ENCODE measurements at regions of chr2 and their contacts with region 1.

Region 1: DNA sequence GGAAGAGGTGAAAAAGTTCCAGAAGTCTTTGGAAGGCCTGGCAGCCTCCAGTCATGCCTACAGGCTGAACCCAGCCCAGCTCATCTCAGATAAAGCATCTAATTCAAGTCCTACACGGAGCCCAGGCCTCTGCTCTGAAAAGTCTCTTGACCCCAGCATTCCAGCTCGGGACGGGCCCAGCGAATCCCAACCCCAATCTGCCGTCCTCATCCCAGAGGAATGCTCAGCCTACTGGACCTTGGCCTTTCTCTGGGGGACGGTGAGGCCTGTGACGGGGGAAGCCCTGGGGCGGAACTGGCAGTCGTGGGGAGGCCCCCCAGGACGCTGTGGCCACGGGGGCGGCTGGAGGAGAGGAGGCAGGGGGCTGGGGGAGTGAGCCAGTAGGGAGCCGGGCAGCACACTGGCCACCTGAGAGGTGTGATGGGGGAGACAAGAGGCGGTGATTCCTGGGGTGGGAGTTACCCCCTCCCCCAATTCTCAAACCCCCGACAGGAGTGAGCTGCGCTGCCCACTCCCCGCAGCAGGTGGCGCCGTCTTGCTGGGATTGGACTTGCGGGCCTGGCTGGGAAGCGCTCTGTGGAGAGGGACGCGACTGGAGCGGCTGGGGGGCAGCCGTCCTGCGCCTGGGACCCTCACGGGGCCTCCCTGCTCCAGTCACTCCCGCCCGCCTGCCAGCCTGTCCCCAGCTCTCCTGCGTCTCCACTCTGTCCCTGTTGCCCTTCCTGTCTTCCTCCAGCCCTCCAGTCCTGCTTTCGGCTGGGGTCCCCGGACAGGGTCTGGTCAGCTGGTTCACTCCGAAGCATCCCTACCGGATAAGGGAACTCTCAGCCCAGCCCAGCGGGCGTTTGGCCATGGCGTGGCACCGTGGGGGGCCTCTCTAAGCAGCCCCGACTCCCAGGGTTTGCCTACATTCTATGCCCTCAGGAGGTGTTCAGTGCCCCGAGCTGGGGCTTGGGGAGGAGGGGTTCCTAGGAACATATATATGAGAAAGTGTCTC is 182.6 kb upstream of the HAAO start:
- DNase-seq: peak; percentile 79 to 82 (median 80)
- ATAC-seq: peak; percentile 62 to 70 (median 66)
- H3K4me3 ChIP-seq: peak overlapping the region; percentile 24 to 47 (median 33)
- H3K27ac ChIP-seq: peak overlapping the region in 2 of 3 donors; percentile 65 to 67
- H3K4me1 ChIP-seq: peaks cover 0 to 31% (median 14%) of the 10 kb centered on the region in 4 donors
- H3K27me3 ChIP-seq: no peaks in the 10 kb centered on the region
- CTCF ChIP-seq: peak; percentile 82 to 93 (median 86)
- POLR2A ChIP-seq: no peak

Region 2: DNA sequence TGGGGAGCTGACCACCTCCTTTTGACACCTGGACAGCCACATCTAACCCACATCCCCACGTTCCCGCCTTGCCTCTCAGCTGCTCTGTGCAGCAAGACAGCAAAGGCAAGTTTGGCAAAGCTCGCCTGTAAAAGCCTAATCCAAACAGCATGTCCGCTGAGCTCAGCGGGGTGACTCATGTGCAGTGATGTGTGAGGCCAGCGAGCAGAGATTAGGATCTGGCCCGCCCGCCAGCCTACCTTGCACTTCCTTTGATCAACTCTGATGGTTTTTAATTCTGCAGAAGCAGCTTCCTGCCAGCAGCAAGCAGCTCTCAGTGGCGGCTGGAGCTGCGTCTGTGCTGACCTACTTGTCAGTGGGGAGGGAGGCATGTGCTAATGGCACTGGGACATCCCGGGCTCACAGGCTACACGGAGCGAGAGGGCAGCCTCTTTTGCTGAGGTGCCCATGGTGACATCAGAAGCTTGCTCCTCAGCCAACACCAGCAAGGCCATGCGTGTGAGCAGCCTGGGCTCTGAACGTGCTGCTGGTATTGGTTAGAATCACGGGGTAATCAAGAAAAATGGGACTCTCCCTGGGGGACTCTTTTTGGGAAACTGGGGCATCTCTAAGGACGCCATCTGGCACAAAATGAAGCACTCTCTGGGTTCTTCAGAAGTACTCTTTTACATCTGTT is 841.9 kb before region 1 on chr2:
- intact Hi-C with region 1: no loop called
- DNase-seq: peak; percentile 87 to 91 (median 89)
- ATAC-seq: peak; percentile 91 to 96 (median 94)
- H3K4me3 ChIP-seq: peak overlapping the region; percentile 8 to 41 (median 36)
- H3K27ac ChIP-seq: peak overlapping the region; percentile 79 to 94 (median 80)
- H3K4me1 ChIP-seq: peaks cover 0 to 20% (median 8%) of the 10 kb centered on the region in 4 donors
- H3K27me3 ChIP-seq: no peaks in the 10 kb centered on the region
- CTCF ChIP-seq: no peak
- POLR2A ChIP-seq: peak; percentile 80

Region 3: DNA sequence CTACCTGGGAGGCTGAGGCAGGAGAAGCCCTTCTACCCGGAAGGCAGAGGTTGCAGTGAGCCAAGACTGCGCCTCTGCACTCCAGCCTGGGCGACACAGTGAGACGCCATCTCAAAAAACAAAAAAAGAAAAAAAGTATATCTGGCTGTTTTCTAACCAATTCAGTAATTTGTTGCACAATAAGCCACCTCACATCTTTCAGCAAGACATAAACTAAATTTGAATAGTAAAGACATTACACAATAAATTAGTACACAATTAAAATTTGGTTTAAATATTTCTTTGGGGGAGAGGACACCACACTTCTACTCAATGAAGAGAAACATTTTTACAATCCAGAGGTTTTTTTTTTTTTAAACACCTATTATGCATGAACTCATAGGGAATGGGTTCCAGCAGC is 442.6 kb before region 1 on chr2:
- intact Hi-C with region 1: no loop called
- DNase-seq: no peak
- ATAC-seq: no peak
- H3K4me3 ChIP-seq: no peak overlapping the region
- H3K27ac ChIP-seq: no peak overlapping the region
- H3K4me1 ChIP-seq: no peaks in the 10 kb centered on the region
- H3K27me3 ChIP-seq: no peaks in the 10 kb centered on the region
- CTCF ChIP-seq: no peak
- POLR2A ChIP-seq: no peak

Region 4: GRCh38 chr2:43131024-43131889 is 156.2 kb after region 1 on chr2:
- intact Hi-C with region 1: loop called in 1 of 2 experiments (anchors 10 kb)
- DNase-seq: peak; percentile 69 to 80 (median 74)
- ATAC-seq: peak; percentile 49 to 69 (median 63)
- H3K4me3 ChIP-seq: no peak overlapping the region
- H3K27ac ChIP-seq: peak overlapping the region; percentile 24 to 54 (median 51)
- H3K4me1 ChIP-seq: no peaks in the 10 kb centered on the region
- H3K27me3 ChIP-seq: no peaks in the 10 kb centered on the region
- CTCF ChIP-seq: peak; percentile 48 to 58 (median 51)
- POLR2A ChIP-seq: no peak